Activated naive CD4-positive, alpha-beta T cell treated with anti-CD3 and anti-CD28 coated beads for 36 hours (primary cell): ENCODE measurements at regions of chr12 and their contacts with region 1.

Region 1: GRCh38 chr12:77049767-77050353 is 15.5 kb downstream of the E2F7 start:
- DNase-seq: no peak
- H3K4me3 Mint-ChIP-seq: no peak overlapping the region
- H3K27ac Mint-ChIP-seq: no peak overlapping the region
- H3K4me1 Mint-ChIP-seq: no peaks in the 10 kb centered on the region
- H3K27me3 Mint-ChIP-seq: no peaks in the 10 kb centered on the region

Region 2: GRCh38 chr12:77031745-77032144 is 18.1 kb before region 1 on chr12:
- CTCF ChIA-PET with region 1: interaction called, 10 read pairs
- intact Hi-C with region 1: no loop called
- DNase-seq: no peak
- H3K4me3 Mint-ChIP-seq: no peak overlapping the region
- H3K27ac Mint-ChIP-seq: no peak overlapping the region
- H3K4me1 Mint-ChIP-seq: no peaks in the 10 kb centered on the region
- H3K27me3 Mint-ChIP-seq: no peaks in the 10 kb centered on the region

Region 3: DNA sequence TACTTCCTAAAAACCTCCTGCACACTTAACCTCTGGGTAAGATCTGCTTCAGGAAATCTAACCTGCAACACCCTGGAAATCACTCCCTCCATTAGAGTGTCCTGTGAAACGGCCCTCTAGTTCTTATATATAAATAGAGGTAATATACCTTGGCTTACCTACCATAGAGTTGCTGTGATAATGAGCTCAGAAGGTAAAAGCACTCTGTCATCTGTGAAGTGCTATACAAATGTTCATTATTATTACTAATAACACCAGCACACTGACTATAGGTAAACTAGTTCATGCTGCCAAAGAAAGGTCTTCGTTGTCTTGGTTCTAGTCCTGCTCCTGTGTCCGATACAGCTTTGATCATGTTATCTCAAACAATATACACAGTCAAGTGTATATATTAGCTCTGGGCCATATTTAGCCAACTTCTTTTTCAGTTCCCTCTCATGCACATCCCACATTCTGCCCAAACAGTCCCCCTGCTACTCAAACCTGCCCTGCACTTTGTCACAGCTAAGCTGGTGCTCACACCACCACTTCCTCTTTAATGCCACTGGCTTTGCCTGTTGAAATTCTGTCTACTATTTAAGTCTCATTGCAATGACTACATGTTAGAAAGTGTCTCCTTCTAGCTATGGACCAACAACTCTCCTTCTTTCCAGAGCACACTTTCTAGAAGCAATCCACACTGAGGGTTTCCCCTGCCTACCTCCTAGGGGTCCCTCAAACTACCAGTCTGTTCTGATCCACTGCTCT is 10.4 kb after region 1 on chr12:
- CTCF ChIA-PET with region 1: interaction called, 10 read pairs
- intact Hi-C with region 1: loop called (anchors 1 kb)
- DNase-seq: no peak
- H3K4me3 Mint-ChIP-seq: no peak overlapping the region
- H3K27ac Mint-ChIP-seq: no peak overlapping the region
- H3K4me1 Mint-ChIP-seq: peaks cover 4% of the 10 kb centered on the region
- H3K27me3 Mint-ChIP-seq: peaks cover 38% of the 10 kb centered on the region

Region 4: DNA sequence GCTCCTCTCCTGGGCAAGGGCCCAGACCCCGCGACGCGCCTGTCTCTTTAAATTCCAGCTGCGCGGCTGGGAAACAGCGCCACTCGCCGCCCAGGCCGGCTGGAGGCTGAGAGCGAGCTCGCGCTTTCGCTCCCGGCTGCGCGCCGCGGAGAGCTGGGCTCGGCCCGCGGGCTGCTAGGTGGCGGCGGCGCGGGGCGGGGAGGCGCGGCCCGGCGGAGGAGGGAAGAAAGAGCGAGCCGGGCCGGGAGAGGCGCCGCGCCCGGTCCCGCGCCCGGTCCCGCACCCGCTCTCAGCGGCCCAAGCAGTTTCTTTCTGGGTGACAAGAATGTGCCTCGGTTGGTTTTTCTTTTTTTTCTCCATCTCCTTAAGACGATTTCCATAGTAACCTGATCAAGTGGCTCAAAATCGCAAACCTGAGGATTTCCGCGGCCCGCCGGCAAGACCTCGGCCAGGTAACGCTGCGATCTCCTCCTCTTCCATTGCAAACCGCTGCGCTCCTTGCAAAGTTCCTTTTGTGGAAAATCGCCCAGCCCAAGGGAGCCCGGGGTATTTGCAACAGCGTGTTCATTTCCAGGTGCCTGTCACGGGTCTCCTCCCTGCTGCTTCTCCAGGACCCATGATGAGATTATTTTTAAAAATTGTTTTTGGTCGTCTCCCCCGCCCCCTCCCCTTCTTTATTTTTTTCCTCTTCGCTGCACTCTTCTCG is 275.1 kb after region 1 on chr12:
- CTCF ChIA-PET with region 1: interaction called, 3 read pairs
- intact Hi-C with region 1: loop called (anchors 2 kb)
- DNase-seq: peak; percentile 41
- H3K4me3 Mint-ChIP-seq: peak overlapping the region; percentile 58
- H3K27ac Mint-ChIP-seq: no peak overlapping the region
- H3K4me1 Mint-ChIP-seq: peaks cover 9% of the 10 kb centered on the region
- H3K27me3 Mint-ChIP-seq: peaks cover 52% of the 10 kb centered on the region

Region 5: DNA sequence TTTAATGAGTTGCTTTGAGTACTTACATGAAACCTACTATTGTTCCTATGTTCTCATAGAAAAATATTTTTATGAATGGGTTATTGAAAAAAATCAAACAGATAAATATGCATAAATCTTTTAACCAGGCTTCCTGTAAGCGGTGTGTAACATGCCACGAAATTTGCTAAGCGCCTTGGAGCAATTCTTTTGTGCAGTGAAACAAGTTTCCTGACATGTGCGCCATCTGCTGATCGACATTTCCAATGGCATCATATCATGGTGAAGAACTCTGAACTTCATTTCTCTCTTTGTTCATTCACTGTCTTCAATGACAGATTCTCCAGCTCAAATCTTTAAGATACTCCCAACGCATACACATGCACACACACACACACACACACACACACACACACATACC is 635.3 kb after region 1 on chr12:
- CTCF ChIA-PET with region 1: no interaction called
- intact Hi-C with region 1: loop called (anchors 1 kb)
- DNase-seq: peak; percentile 27
- H3K4me3 Mint-ChIP-seq: no peak overlapping the region
- H3K27ac Mint-ChIP-seq: no peak overlapping the region
- H3K4me1 Mint-ChIP-seq: no peaks in the 10 kb centered on the region
- H3K27me3 Mint-ChIP-seq: no peaks in the 10 kb centered on the region

Region 6: DNA sequence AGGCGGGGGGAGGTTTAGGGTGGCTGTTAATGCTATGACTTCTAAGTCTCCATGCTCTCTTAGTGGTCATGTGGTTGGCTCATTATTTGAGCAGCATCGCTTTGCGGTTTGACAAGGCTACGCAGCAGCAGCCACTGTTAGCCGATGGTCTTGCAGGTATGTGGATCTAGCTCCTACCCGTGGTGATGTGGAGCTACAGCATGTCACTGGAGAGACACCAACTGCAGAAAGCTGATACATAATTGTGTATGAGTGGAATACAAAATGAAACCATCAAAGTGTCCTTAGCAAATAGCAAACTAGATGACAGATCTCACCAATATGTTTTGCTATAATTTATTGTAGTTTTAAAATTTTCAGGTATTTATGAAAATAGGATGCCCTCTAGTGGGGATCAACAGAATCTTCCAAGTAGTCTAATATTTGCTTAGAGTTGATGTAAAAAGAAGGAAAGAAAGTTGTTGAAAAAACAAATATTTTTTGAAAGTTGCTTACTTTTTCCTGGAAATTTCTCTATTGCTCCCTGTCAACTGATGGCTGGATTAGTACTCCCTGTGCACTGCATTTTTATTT is 875.8 kb after region 1 on chr12:
- CTCF ChIA-PET with region 1: no interaction called
- intact Hi-C with region 1: loop called (anchors 1 kb)
- DNase-seq: peak; percentile 24
- H3K4me3 Mint-ChIP-seq: no peak overlapping the region
- H3K27ac Mint-ChIP-seq: no peak overlapping the region
- H3K4me1 Mint-ChIP-seq: no peaks in the 10 kb centered on the region
- H3K27me3 Mint-ChIP-seq: no peaks in the 10 kb centered on the region